ENCODE measurements at regions of chr9 and their contacts with region 1.

Region 1: DNA sequence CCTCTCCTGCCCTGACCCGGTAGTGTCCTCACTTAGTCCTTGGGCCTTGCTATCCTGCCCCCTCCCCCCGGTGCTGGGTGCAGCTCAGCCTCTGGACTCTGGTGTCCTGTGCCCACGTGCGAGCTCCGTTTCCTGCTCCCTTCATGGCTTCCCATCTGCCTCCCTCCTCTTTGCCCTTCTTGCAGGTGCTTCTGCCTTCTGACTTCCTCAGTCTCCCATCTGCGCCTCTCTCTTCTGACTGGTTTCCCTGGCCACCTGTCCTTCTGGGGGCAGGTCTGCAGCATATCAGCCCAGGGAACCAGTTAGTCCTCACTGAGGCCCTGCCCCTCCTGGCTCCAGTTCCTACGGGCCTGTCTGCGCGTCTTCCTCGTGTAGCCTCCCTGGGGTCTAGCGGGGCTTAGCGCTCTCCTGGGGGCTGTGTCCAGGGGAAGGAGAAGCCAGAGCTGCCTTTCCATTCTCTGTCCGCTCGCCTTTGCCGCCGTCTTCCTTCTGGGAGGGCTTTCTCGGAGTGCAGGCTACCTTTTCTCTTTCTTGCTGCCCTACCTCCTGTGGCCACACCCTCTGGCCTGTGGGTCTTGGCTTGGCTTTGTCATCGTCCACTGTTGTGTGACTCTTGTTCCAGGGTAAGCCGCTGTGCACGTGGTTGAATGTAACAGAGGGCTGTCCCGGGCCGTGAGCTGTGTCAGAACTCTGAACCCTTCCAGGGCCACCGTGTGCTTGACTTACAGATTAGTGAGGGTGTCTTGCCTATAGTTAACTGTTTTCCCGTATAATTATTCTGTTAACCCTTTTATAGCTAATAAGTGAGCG is 51.8 kb downstream of the EHMT1 start:
- DNase-seq: no peak
- ATAC-seq: peak; percentile 57

Region 2: GRCh38 chr9:137618105-137619067 is 52.2 kb before region 1 on chr9 and contains the start of gene EHMT1:
- intact Hi-C with region 1: loop called (anchors 5 kb)
- DNase-seq: peak; percentile 92
- ATAC-seq: peak; percentile 92
- total RNA-seq, gene EHMT1: 30.5 TPM

Region 3: GRCh38 chr9:137694967-137695879 is 24.6 kb after region 1 on chr9:
- intact Hi-C with region 1: loop called (anchors 2 kb)
- DNase-seq: no peak
- ATAC-seq: peak; percentile 74

Region 4: DNA sequence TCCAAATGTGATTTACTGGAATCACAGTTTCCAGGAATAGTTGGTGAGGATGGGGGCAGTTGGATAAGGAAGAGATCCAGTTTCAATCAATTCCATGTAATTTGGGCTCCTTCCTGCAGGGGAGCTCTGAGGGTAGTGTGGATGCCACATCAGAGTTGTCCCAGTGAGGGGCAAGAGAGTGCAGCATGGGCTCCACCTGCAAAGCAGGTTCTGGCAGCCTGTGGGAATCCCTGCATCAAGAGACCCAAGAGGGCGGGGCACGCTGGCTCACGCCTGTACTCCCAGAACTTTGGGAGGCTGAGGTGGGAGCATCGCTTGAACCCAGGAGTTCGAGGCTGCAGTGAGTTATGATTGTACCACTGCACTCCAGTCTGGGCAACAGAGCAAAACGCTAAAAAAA is 395.5 kb after region 1 on chr9:
- intact Hi-C with region 1: no loop called
- DNase-seq: peak; percentile 37
- ATAC-seq: no peak

Measured in Right ventricle myocardium inferior (tissue), 1 donor.